Head of caudate nucleus (tissue), 42 donors: ENCODE measurements at regions of chr2 and their contacts with region 1.

Region 1: DNA sequence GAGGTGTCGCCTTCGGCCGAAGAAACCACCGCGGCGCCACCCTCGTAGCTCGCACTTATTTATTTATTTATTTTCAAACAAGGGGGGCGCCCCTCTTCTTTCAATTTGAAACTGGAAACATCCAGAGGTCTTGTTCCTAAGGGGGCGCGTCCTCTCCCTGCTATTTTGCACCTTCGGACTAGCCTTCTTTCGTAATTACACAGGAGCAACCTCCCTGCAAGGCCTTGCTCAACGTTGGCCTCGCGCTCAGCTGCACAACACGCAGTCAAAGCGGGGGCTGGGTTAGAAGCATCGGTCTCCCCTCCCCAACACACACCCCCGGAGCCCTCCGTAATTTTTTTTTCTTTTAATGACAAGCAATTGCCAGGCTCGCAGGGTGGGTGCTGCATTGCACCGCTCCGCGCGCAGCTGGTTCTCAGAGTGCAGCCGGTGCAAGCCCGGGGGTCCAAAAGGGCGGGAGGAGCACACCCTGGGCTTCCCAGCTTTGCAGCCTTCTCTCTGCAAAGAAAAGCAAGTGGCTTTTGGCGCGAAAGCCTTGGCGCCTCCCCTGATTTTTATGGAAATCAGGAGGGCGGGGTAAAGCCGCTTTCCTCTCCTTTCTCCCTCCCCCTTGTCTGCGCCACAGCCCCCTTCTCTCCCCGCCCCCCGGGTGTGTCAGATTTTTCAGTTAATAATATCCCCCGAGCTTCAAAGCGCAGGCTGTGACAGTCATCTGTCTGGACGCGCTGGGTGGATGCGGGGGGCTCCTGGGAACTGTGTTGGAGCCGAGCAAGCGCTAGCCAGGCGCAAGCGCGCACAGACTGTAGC is at the start of gene MYCN:
- DNase-seq: peak; percentile 63 to 94 (median 85)

Region 2: GRCh38 chr2:15984368-15985255 is 44.6 kb after region 1 on chr2:
- intact Hi-C with region 1: loop called (anchors 5 kb)
- DNase-seq: peak; percentile 83 to 96 (median 92)

Region 3: DNA sequence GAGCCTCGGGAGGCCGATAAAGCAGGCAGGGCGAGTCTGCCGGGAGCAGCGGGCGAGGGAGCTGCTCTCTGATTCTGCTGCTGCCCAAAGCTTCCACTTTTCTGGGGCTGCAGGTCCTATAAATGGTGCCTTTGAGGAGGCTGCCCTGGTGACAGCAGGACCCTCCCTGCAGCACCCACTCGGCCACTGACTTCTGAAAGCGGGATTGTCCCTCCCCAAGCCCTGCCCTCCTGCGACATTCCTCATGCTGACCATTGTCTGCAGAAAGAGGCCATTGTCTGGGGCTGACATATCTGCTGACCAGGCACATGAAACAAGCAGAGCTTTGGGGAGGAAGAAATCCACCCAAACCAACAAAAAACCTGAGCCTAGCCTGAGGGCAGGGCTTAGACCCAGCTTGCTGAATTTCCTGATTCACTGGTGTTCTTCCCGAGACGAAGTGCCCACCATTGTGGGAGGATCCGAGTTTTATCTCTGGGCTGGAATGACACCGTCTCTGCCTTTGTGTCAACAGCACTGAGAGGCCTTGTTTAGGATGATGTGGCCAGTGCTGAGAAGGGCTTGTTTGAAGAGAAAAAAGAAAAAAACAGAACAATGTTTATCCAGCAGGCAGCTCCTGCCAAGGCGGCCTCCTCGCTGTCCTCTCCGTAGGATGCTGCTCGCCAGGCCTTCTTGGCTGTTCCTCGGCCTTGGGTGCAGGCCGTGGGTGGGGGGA is 130.0 kb after region 1 on chr2:
- intact Hi-C with region 1: loop called (anchors 5 kb)
- DNase-seq: peak; percentile 72 to 97 (median 91)

Region 4: DNA sequence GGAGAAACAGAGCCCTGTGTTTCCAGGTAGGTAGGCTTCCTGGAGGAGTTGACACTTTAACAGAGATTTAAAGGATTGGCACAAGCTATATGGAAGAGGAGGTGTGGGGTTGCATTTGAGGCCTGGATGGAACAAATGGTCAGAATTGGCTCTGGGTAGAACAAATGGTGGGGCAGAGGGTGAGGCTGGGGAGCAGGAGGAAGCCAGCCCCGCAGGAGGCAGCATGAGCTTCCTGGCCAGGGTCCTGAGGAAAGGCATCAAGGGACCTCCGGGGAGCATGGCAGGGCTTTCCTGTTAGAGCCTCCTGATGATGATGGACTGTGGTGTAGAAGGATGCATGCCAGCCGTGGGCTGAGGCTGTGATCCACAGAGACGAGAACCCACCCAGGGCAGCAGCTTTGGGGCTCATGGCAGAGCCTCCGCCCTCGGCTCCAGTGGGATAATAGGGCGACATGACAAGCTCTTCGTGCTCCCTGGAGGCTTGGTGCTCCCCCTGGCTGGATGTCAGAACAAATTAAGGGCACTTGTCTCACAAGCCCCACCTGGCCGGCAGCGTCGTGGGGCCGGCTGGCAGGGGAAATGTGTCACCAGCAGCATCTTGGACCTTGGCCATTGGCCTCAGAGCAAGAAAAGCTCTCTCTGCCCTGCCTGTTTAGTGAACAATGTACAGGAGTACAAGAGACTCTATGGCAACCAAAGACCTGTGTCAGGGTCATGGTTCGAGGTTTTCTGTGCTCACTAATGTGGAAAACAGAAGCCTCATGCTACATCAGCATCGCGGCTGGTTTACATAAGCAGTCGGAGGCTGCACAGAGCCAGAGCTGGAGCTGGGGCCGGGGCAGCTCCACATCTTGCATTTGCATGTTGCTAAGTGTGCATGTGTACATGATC is 153.8 kb after region 1 on chr2:
- intact Hi-C with region 1: no loop called
- DNase-seq: no peak

Region 5: GRCh38 chr2:16281451-16282336 is 341.6 kb after region 1 on chr2:
- intact Hi-C with region 1: loop called (anchors 2 kb)
- DNase-seq: peak in 33 of 42 donors; percentile 16 to 79 (median 49)

Region 6: GRCh38 chr2:16608661-16609643 is 668.9 kb after region 1 on chr2:
- intact Hi-C with region 1: loop called (anchors 5 kb)
- DNase-seq: peak; percentile 77 to 97 (median 92)